KBM-7 (cell line): ENCODE measurements at regions of chr7 and their contacts with region 1.

Region 1: GRCh38 chr7:141014524-141015395 is at the start of gene MRPS33:
- DNase-seq: peak; percentile 97

Region 2: DNA sequence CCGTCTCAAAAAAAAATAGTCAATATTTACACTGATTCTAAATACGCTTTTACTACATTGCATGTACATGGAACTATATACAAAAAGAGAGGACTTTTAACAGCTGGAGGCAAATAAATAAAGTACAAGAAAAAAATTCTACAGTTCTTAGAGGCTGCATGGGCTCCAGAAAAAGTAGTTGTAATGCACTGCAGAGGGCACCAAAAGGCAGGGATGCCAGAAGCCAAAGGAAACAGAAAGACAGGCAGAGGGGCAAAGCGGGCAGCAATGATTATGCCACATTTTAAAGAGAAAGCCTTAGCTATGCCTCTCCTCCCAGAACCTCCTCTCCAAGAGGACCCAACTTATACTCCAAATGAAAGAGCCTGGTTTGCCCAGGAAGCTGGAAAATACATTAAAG is 353.6 kb before region 1 on chr7:
- in situ Hi-C with region 1: loop called (anchors 10 kb)
- DNase-seq: no peak